Endothelial cell of umbilical vein (primary cell): ENCODE measurements at regions of chr6 and their contacts with region 1.

Region 1: GRCh38 chr6:38193481-38194281 is 374.2 kb downstream of the ZFAND3 start:
- DNase-seq: peak; percentile 71
- H3K4me3 ChIP-seq: no peak overlapping the region
- H3K27ac ChIP-seq: peak overlapping the region; percentile 28
- H3K4me1 ChIP-seq: peaks cover 13% of the 10 kb centered on the region
- H3K27me3 ChIP-seq: no peaks in the 10 kb centered on the region
- CTCF ChIP-seq: no peak
- POLR2A ChIP-seq: no peak

Region 2: GRCh38 chr6:37691904-37692806 is 501.5 kb before region 1 on chr6:
- CTCF ChIA-PET with region 1: no interaction called
- POLR2A ChIA-PET with region 1: no interaction called
- dilution Hi-C with region 1: no loop called
- intact Hi-C with region 1: no loop called
- DNase-seq: peak; percentile 50
- H3K4me3 ChIP-seq: no peak overlapping the region
- H3K27ac ChIP-seq: no peak overlapping the region
- H3K4me1 ChIP-seq: peaks cover 10% of the 10 kb centered on the region
- H3K27me3 ChIP-seq: peaks cover 34 to 40% of the 10 kb centered on the region in 2 experiments
- CTCF ChIP-seq: peak; percentile 96 to 97
- POLR2A ChIP-seq: no peak

Region 3: DNA sequence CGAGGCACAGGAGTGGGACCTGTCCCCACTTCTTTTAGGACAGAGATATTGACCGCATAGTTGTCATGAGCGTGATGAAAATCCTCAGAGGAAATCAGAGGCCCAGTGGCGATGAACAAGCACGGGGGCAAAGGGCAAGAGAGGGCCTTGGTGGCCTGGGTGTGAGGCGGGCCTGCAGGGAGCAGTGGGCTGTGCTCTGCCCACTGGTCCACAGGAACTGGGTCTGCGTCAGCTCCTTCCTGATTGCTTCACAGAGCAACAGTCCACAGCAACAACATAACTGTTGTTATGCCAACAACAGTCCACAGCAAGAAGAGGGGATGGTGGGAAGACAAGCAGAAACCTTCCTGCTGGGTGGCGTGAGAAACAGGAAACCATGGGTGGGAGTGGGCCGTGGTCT is 38.5 kb before region 1 on chr6:
- CTCF ChIA-PET with region 1: no interaction called
- POLR2A ChIA-PET with region 1: no interaction called
- dilution Hi-C with region 1: no loop called
- intact Hi-C with region 1: loop called (anchors 2 kb)
- DNase-seq: peak; percentile 94
- H3K4me3 ChIP-seq: no peak overlapping the region
- H3K27ac ChIP-seq: peak overlapping the region; percentile 100
- H3K4me1 ChIP-seq: peaks cover 21% of the 10 kb centered on the region
- H3K27me3 ChIP-seq: no peaks in the 10 kb centered on the region
- CTCF ChIP-seq: no peak
- POLR2A ChIP-seq: no peak

Region 4: DNA sequence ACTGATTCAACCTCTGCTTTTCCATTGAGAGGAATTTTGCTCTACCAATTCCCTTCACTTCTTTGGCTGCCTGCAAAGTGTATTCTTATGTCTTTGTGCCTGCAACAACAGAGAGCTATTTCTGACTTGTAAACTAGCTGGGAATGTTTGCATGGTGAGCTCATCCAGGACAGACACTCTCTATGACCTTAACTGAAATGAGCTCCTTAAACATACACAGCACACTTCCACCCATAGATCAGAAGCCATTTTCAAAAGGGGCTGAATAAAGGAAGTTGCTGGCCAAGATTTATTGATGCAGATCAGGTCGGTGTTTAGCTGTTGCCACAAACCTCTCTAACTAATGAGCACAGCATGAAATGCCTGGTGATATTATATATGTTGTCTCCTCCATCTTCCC is 68.3 kb after region 1 on chr6:
- CTCF ChIA-PET with region 1: no interaction called
- POLR2A ChIA-PET with region 1: no interaction called
- dilution Hi-C with region 1: no loop called
- intact Hi-C with region 1: loop called (anchors 5 kb)
- DNase-seq: peak; percentile 90
- H3K4me3 ChIP-seq: no peak overlapping the region
- H3K27ac ChIP-seq: peak overlapping the region; percentile 66
- H3K4me1 ChIP-seq: peaks cover 39% of the 10 kb centered on the region
- H3K27me3 ChIP-seq: no peaks in the 10 kb centered on the region
- CTCF ChIP-seq: no peak
- POLR2A ChIP-seq: no peak

Region 5: GRCh38 chr6:38273325-38273724 is 79.6 kb after region 1 on chr6:
- CTCF ChIA-PET with region 1: no interaction called
- POLR2A ChIA-PET with region 1: no interaction called
- dilution Hi-C with region 1: no loop called
- intact Hi-C with region 1: no loop called
- DNase-seq: no peak
- H3K4me3 ChIP-seq: no peak overlapping the region
- H3K27ac ChIP-seq: no peak overlapping the region
- H3K4me1 ChIP-seq: peaks cover 6% of the 10 kb centered on the region
- H3K27me3 ChIP-seq: no peaks in the 10 kb centered on the region
- CTCF ChIP-seq: no peak
- POLR2A ChIP-seq: no peak

Region 6: DNA sequence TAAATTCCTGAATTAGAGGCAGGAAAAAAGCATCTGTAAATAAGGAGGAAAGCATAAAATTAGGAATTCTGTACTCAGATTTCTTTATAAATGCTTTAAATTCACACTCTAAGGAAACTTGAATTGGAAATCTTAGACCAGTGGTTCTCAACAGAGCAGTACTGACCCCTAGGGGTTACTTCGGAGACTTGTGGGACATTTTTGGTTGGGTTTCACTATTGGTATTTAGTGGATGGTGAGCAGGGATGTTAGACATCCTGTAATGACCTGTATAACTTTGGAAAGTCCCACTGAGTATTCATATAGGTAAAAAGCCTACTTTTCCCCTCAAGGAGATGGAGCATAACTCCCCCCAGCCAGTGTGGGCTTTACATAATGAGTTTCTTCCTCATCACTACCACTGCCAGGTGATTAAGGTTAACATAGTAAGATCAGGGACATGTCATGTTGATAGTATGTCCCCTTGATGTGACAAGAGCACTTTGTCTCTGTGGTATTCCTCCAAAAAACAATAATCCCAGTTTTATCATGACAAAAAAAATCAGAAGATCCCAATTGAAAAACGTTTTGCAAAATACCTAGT is 478.3 kb after region 1 on chr6:
- CTCF ChIA-PET with region 1: no interaction called
- POLR2A ChIA-PET with region 1: no interaction called
- dilution Hi-C with region 1: no loop called
- intact Hi-C with region 1: loop called (anchors 10 kb)
- DNase-seq: peak; percentile 60
- H3K4me3 ChIP-seq: no peak overlapping the region
- H3K27ac ChIP-seq: no peak overlapping the region
- H3K4me1 ChIP-seq: peaks cover 15% of the 10 kb centered on the region
- H3K27me3 ChIP-seq: no peaks in the 10 kb centered on the region
- CTCF ChIP-seq: peak; percentile 55 to 60
- POLR2A ChIP-seq: no peak